Transverse colon (tissue), 4 donors: ENCODE measurements at regions of chr7 and their contacts with region 1.

Region 1: GRCh38 chr7:29239638-29240037 is 45.1 kb downstream of the CHN2 start:
- DNase-seq: no peak
- H3K4me3 ChIP-seq: no peak overlapping the region
- H3K27ac ChIP-seq: no peak overlapping the region
- H3K4me1 ChIP-seq: no peaks in the 10 kb centered on the region
- H3K27me3 ChIP-seq: no peaks in the 10 kb centered on the region
- CTCF ChIP-seq: peak; percentile 17 to 57 (median 26)
- EP300 ChIP-seq: no peak
- POLR2A ChIP-seq: no peak

Region 2: DNA sequence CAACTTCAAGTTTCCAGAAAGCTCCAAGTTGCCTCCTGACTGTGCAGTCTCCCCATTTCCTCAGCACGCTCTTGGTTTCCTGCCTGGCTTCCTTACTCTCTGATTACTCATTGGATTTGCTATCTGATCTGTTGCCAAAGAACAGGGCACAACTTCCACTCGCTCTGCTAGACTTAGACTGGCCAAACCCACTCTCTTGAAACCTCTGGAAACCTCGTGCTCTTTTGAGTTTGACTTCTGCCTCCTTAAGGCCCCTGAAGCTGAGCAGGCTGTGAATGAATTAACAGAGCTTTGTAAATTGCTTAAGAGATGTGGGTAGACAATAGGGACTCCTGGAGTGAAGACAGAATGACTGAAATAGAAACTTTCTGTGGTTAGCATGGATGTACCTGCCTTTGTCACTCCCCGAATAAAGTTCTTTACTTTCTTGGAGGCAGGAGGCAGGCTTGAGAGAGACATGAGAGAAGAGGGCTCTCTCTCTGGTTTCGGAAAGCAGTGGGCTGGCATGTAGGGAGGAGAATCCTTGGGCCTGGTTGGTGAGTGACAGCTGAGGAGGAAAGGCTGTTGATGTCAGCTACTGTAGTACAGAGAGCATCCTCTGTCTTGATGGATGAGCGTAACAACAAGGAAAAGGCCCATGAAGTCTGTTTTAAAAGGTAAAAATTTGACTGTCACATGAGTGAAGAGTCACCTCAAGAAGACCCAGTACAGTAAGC is 25.7 kb after region 1 on chr7:
- in situ Hi-C with region 1: no loop called
- intact Hi-C with region 1: no loop called
- DNase-seq: no peak
- H3K4me3 ChIP-seq: no peak overlapping the region
- H3K27ac ChIP-seq: no peak overlapping the region
- H3K4me1 ChIP-seq: no peaks in the 10 kb centered on the region
- H3K27me3 ChIP-seq: no peaks in the 10 kb centered on the region
- CTCF ChIP-seq: no peak
- EP300 ChIP-seq: no peak
- POLR2A ChIP-seq: no peak

Region 3: GRCh38 chr7:29394321-29394720 is 154.7 kb after region 1 on chr7:
- in situ Hi-C with region 1: no loop called
- intact Hi-C with region 1: loop called (anchors 5 kb)
- DNase-seq: no peak
- H3K4me3 ChIP-seq: no peak overlapping the region
- H3K27ac ChIP-seq: no peak overlapping the region
- H3K4me1 ChIP-seq: no peaks in the 10 kb centered on the region
- H3K27me3 ChIP-seq: no peaks in the 10 kb centered on the region
- CTCF ChIP-seq: no peak
- EP300 ChIP-seq: no peak
- POLR2A ChIP-seq: no peak

Region 4: DNA sequence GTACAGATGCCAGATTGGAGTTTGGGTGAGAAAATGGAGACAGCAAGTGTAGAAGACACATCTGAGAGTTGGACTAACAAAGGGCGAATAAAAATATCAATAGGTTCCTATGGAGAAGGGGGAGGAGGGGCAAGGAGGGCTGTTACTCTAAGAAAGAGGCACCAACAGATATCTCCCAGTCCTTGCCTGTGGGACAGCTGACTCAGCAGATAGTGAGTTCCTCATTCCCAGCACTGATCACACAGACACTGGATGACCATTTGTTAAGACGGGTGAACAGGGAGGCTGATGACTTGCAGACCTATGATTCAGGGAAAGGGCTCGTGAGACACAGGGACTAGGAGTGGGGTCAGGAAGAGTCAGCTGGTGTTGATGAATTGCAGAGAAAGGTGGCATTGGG is 318.3 kb after region 1 on chr7:
- in situ Hi-C with region 1: no loop called
- intact Hi-C with region 1: no loop called
- DNase-seq: no peak
- H3K4me3 ChIP-seq: no peak overlapping the region
- H3K27ac ChIP-seq: no peak overlapping the region
- H3K4me1 ChIP-seq: no peaks in the 10 kb centered on the region
- H3K27me3 ChIP-seq: peaks cover 14% of the 10 kb centered on the region
- CTCF ChIP-seq: no peak
- EP300 ChIP-seq: no peak
- POLR2A ChIP-seq: no peak